ENCODE measurements at regions of chr1 and their contacts with region 1.

Region 1: GRCh38 chr1:27489910-27490741 is at the start of gene WASF2:
- DNase-seq: peak; percentile 89
- ATAC-seq: peak; percentile 92
- H3K4me3 ChIP-seq: peak within 1 kb of the TSS; percentile 98
- H3K27ac ChIP-seq: peak within 1 kb of the TSS; percentile 99
- H3K4me1 ChIP-seq: peaks cover 27% of the 10 kb centered on the region
- H3K27me3 ChIP-seq: no peaks in the 10 kb centered on the region
- CTCF ChIP-seq: no peak
- EP300 ChIP-seq: peak in 1 of 2 experiments; percentile 35; a peak in 1 of 4 replicates
- POLR2A ChIP-seq: peak; percentile 91
- RAD21 ChIP-seq: no peak
- polyA plus RNA-seq, gene WASF2: 7.0 to 9.3 TPM

Region 2: GRCh38 chr1:27357281-27358037 is 132.7 kb before region 1 on chr1:
- CTCF ChIA-PET with region 1: no interaction called
- POLR2A ChIA-PET with region 1: no interaction called
- RAD21 ChIA-PET with region 1: no interaction called
- SMC1A ChIA-PET with region 1: no interaction called
- in situ Hi-C with region 1: no loop called
- intact Hi-C with region 1: no loop called
- DNase-seq: no peak
- ATAC-seq: peak; percentile 88
- H3K4me3 ChIP-seq: peak overlapping the region; percentile 54; the same call in 1 of the 2 replicates
- H3K27ac ChIP-seq: no peak overlapping the region
- H3K4me1 ChIP-seq: peaks cover 13% of the 10 kb centered on the region
- H3K27me3 ChIP-seq: no peaks in the 10 kb centered on the region; a peak in 1 of 4 replicates
- CTCF ChIP-seq: peak; percentile 90 to 96 (median 93); a peak in 5 of 6 replicates
- EP300 ChIP-seq: no peak
- POLR2A ChIP-seq: no peak
- RAD21 ChIP-seq: peak; percentile 49

Region 3: DNA sequence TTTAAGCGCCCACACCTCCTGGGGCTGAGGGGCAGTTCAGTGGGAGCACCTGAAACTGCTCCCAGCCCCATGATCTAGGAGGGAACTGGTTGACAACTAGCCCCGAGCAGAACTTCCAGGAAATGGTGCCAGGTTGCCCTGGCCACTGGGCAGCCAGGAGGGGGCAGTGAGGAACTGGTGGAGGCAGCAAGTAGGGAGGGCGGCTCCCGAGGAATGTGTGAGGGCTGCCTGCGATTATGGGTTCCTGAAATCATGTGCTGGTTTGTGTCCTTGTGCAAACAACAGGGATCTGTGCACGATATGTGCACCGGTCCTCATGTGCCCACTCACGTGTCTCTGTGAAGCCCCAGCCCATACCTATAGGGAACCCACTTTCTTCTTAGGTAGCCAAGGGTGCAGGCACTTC is 87.8 kb before region 1 on chr1:
- CTCF ChIA-PET with region 1: interaction called, 10 read pairs
- POLR2A ChIA-PET with region 1: no interaction called
- RAD21 ChIA-PET with region 1: interaction called, 3 read pairs
- SMC1A ChIA-PET with region 1: interaction called, 3 read pairs
- in situ Hi-C with region 1: no loop called
- intact Hi-C with region 1: no loop called
- DNase-seq: no peak
- ATAC-seq: peak; percentile 31
- H3K4me3 ChIP-seq: no peak overlapping the region
- H3K27ac ChIP-seq: no peak overlapping the region
- H3K4me1 ChIP-seq: peaks cover 16% of the 10 kb centered on the region
- H3K27me3 ChIP-seq: no peaks in the 10 kb centered on the region
- CTCF ChIP-seq: peak; percentile 37 to 48 (median 43); a peak in 4 of 6 replicates
- EP300 ChIP-seq: no peak
- POLR2A ChIP-seq: 0 out of 2 replicates have a peak, but pooled peaks have one; percentile 37
- RAD21 ChIP-seq: peak; percentile 55

Region 4: GRCh38 chr1:27436204-27437159 is 53.6 kb before region 1 on chr1:
- CTCF ChIA-PET with region 1: interaction called, 5 read pairs
- POLR2A ChIA-PET with region 1: interaction called, 6 read pairs
- RAD21 ChIA-PET with region 1: interaction called, 11 read pairs
- SMC1A ChIA-PET with region 1: interaction called, 67 read pairs
- in situ Hi-C with region 1: no loop called
- intact Hi-C with region 1: no loop called
- DNase-seq: no peak
- ATAC-seq: peak; percentile 75
- H3K4me3 ChIP-seq: peak overlapping the region; percentile 48
- H3K27ac ChIP-seq: peak overlapping the region; percentile 82
- H3K4me1 ChIP-seq: peaks cover 71% of the 10 kb centered on the region
- H3K27me3 ChIP-seq: no peaks in the 10 kb centered on the region
- CTCF ChIP-seq: no peak
- EP300 ChIP-seq: no peak
- POLR2A ChIP-seq: no peak
- RAD21 ChIP-seq: no peak

Region 5: DNA sequence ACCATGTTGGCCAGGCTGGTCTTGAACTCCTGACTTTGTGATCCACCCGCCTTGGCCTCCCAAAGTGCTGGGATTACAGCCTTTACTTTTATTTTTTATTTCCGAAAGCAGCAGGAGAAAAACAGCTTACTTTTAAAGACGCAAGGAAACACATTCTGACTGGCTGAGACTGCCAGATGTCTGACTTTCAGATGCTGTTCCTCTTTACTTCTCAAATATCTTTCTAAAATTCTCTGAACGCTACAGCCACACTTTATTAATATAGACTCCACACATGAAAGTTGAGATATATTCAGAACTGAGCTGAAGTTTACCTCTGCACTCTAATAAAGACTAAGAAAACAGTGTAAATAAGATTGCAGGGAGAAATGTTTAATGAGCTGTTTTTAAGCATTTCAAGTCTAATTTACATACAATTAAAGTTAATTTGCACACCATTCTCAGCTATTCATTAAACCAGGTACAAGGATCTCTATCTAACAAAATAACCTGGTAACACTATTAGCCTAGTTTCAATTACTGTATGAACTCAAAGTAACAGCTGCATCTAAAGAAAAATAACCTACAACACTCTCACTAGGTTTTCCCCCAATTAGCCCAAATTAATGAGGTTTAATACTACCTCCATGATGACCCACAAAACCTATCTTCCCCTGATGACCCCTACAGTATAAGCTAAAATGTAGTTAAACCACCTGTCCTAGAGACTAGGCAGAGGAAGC is 25.0 kb before region 1 on chr1:
- CTCF ChIA-PET with region 1: interaction called, 3 read pairs
- POLR2A ChIA-PET with region 1: interaction called, 8 read pairs
- RAD21 ChIA-PET with region 1: interaction called, 6 read pairs
- SMC1A ChIA-PET with region 1: interaction called, 23 read pairs
- in situ Hi-C with region 1: no loop called
- intact Hi-C with region 1: no loop called
- DNase-seq: no peak
- ATAC-seq: peak; percentile 66
- H3K4me3 ChIP-seq: no peak overlapping the region
- H3K27ac ChIP-seq: peak overlapping the region; percentile 41
- H3K4me1 ChIP-seq: peaks cover 15% of the 10 kb centered on the region
- H3K27me3 ChIP-seq: no peaks in the 10 kb centered on the region
- CTCF ChIP-seq: no peak
- EP300 ChIP-seq: no peak
- POLR2A ChIP-seq: no peak
- RAD21 ChIP-seq: no peak

Region 6: GRCh38 chr1:27525296-27526272 is 35.5 kb after region 1 on chr1:
- CTCF ChIA-PET with region 1: interaction called, 3 read pairs
- POLR2A ChIA-PET with region 1: interaction called, 11 read pairs
- RAD21 ChIA-PET with region 1: interaction called, 23 read pairs
- SMC1A ChIA-PET with region 1: interaction called, 10 read pairs
- in situ Hi-C with region 1: no loop called
- intact Hi-C with region 1: no loop called
- DNase-seq: peak; percentile 53
- ATAC-seq: peak; percentile 80
- H3K4me3 ChIP-seq: peak overlapping the region; percentile 68
- H3K27ac ChIP-seq: peak overlapping the region; percentile 87
- H3K4me1 ChIP-seq: peaks cover 34% of the 10 kb centered on the region
- H3K27me3 ChIP-seq: no peaks in the 10 kb centered on the region
- CTCF ChIP-seq: no peak
- EP300 ChIP-seq: peak in 1 of 2 experiments; percentile 29; a peak in 1 of 4 replicates
- POLR2A ChIP-seq: no peak
- RAD21 ChIP-seq: no peak; the same call in 1 of the 2 replicates

Region 7: DNA sequence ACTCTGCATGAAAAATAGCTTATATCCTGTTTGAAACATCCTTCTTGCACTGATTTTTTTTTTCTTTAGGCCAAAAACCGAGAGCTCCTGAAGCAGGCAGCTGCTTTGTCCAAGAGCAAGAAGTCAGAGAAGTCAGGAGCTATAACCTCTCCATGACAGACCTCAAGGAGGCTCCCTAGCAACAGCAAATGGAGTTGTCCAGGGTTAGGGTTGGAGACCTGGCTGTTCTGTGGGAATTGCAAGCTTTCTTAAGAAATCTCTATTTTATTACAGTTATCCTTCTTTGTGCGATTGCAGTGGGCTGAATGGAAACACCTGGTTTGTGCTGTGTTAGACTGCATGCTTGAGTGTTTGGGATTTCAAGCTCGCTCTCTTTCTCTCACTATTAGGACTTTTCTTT is 270.3 kb after region 1 on chr1:
- CTCF ChIA-PET with region 1: no interaction called
- POLR2A ChIA-PET with region 1: no interaction called
- RAD21 ChIA-PET with region 1: no interaction called
- SMC1A ChIA-PET with region 1: no interaction called
- in situ Hi-C with region 1: no loop called
- intact Hi-C with region 1: no loop called
- DNase-seq: no peak
- ATAC-seq: no peak
- H3K4me3 ChIP-seq: no peak overlapping the region
- H3K27ac ChIP-seq: no peak overlapping the region
- H3K4me1 ChIP-seq: no peaks in the 10 kb centered on the region
- H3K27me3 ChIP-seq: no peaks in the 10 kb centered on the region
- CTCF ChIP-seq: peak in 1 of 3 experiments; percentile 8; a peak in 1 of 6 replicates
- EP300 ChIP-seq: no peak
- POLR2A ChIP-seq: no peak
- RAD21 ChIP-seq: no peak

Measured in GM12878 (cell line).